ENCODE measurements at regions of chr2 and their contacts with region 1.

Region 1: DNA sequence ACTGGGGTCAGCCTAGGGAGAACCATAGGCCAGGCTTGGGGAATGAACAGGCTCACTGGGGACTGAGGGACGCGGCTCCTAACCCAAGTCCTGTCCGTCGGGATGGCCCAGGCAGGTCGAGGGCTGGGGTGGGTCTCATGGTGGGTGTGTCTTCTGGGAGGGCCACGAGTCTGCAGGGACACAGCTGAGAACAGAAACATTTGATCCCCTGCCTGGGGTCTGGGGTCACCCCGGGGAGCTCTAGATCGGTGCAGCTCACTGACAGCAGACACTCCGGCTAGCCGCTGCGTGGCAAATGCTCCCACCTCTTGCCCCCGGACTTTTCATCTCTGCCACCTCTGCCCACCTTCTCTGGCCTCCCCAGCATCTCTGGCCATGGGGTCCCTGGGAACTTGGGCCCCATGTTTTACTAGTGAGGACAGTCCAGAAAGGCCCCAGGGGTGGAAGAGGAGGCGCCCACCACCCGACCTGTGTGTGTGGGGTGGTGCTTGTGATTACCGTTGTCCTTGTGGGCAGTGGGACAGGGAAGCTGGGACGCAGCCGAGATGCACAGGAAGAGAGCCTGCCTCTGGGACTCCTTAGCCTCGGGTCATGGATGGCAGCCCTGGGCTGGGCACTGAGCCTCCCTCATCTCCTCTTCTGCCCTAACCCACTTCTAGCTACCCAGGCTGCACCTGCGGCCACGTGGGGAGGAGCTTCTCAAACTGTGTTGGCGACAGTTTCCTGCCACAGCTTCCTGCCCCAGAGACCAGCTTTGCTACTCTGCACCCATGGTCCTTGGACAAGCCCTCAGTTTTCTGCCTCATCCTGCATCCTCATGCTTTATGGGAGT is 4.9 kb downstream of the ZAP70 start:
- DNase-seq: peak; percentile 58 to 90 (median 80)
- ATAC-seq: peak; percentile 76
- H3K4me3 ChIP-seq: peak overlapping the region; percentile 68 to 91
- H3K4me3 Mint-ChIP-seq: peak overlapping the region; percentile 96
- H3K27ac ChIP-seq: peak overlapping the region; percentile 80 to 88
- H3K27ac Mint-ChIP-seq: peak overlapping the region; percentile 97
- H3K4me1 ChIP-seq: peaks cover 80% of the 10 kb centered on the region
- H3K4me1 Mint-ChIP-seq: peaks cover 85% of the 10 kb centered on the region
- H3K27me3 ChIP-seq: no peaks in the 10 kb centered on the region
- H3K27me3 Mint-ChIP-seq: no peaks in the 10 kb centered on the region
- CTCF ChIP-seq: no peak

Region 2: GRCh38 chr2:97645695-97646629 is 72.3 kb before region 1 on chr2 and contains the start of gene COX5B:
- CTCF ChIA-PET with region 1: interaction called, 4 read pairs
- POLR2A ChIA-PET with region 1: interaction called, 9 read pairs
- intact Hi-C with region 1: loop called (anchors 5 kb)
- DNase-seq: peak; percentile 97 to 99 (median 99)
- ATAC-seq: peak; percentile 97
- H3K4me3 ChIP-seq: peak within 1 kb of the TSS; percentile 94 to 97
- H3K4me3 Mint-ChIP-seq: peak within 1 kb of the TSS; percentile 91
- H3K27ac ChIP-seq: peak within 1 kb of the TSS; percentile 83 to 90
- H3K27ac Mint-ChIP-seq: peak within 1 kb of the TSS; percentile 95
- H3K4me1 ChIP-seq: peaks cover 20% of the 10 kb centered on the region
- H3K4me1 Mint-ChIP-seq: peaks cover 20% of the 10 kb centered on the region
- H3K27me3 ChIP-seq: no peaks in the 10 kb centered on the region
- H3K27me3 Mint-ChIP-seq: no peaks in the 10 kb centered on the region
- CTCF ChIP-seq: no peak
- total RNA-seq, gene COX5B: 115 to 117 TPM

Region 3: DNA sequence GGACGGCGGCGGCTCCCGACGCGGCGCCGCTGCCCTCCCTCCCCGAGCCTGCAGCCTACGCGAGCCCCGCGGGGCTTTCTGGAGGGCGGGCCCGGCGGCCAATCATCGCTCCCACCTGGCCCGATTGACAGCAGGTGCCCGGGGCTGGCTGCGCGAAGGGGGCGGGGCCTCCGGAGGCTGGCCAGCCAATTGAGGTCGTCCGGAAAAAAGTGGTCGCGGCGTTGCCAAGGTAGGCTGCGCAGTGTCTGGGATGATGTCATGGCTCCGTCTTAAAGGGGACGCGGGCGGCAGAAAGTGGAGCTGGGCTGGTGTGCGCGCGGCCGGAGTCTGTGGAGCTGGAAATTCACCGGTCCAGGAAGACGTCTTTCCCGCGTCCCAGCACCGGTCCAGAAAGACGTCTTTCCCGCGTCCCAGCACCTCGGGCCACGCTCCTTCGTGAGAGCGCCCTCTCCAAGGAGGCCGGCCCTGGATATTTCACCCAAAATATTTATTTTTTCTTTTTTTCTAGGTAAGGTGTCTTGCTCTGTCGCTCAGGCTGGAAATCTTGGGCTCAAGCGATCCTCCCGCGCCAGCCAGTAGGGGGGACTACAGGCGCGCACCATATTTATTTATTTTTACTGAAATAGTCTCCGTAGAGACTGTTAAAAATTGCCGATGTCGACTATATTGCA is 54.2 kb before region 1 on chr2 and contains the start of gene ACTR1B:
- CTCF ChIA-PET with region 1: interaction called, 3 read pairs
- POLR2A ChIA-PET with region 1: interaction called, 8 read pairs
- intact Hi-C with region 1: loop called in 1 of 2 experiments (anchors 1 kb)
- DNase-seq: peak; percentile 94 to 100 (median 97)
- ATAC-seq: peak; percentile 86
- H3K4me3 ChIP-seq: peak within 1 kb of the TSS; percentile 86 to 93
- H3K4me3 Mint-ChIP-seq: peak within 1 kb of the TSS; percentile 93
- H3K27ac ChIP-seq: peak within 1 kb of the TSS; percentile 94 to 97
- H3K27ac Mint-ChIP-seq: peak within 1 kb of the TSS; percentile 97
- H3K4me1 ChIP-seq: peaks cover 30% of the 10 kb centered on the region
- H3K4me1 Mint-ChIP-seq: peaks cover 28% of the 10 kb centered on the region
- H3K27me3 ChIP-seq: no peaks in the 10 kb centered on the region
- H3K27me3 Mint-ChIP-seq: no peaks in the 10 kb centered on the region
- CTCF ChIP-seq: no peak
- total RNA-seq, gene ACTR1B: 81.9 to 82.1 TPM

Region 4: DNA sequence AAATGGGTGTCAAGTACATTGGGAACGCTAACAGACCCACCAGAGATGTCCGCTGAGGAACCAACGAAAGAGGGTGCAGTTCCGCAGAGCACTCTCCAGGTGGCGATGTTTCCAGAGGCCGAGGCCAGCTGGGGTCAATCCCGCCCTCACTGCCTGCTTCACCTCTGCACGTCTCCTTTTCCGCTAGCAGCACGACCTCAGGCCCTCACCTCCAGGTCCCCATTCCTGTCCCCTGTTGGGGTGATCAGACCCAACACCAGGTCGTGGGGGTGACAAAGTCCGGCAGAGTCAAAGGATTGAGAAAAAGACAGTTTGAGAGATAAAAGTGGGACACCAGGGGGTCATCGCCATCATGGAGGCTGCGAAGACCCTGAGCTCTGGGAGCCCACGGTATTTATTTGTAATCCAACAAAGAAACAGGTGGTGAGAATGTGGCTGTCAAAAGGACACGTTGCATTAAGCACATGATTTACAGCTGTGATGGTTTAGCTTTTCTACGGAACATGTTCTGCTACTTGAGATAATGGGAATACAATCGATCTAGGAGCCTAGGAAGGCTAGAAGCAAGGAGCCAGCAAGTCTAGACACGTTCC is 22.4 kb after region 1 on chr2:
- CTCF ChIA-PET with region 1: interaction called, 132 read pairs
- POLR2A ChIA-PET with region 1: interaction called, 18 read pairs
- intact Hi-C with region 1: loop called in 1 of 2 experiments (anchors 2 kb)
- DNase-seq: peak in 4 of 9 experiments; percentile 37 to 70 (median 54)
- ATAC-seq: peak; percentile 55
- H3K4me3 ChIP-seq: no peak overlapping the region
- H3K4me3 Mint-ChIP-seq: no peak overlapping the region
- H3K27ac ChIP-seq: peak overlapping the region in 1 of 2 experiments; percentile 68
- H3K27ac Mint-ChIP-seq: peak overlapping the region; percentile 77
- H3K4me1 ChIP-seq: peaks cover 36% of the 10 kb centered on the region
- H3K4me1 Mint-ChIP-seq: peaks cover 59% of the 10 kb centered on the region
- H3K27me3 ChIP-seq: no peaks in the 10 kb centered on the region
- H3K27me3 Mint-ChIP-seq: no peaks in the 10 kb centered on the region
- CTCF ChIP-seq: peak; percentile 61

Region 5: GRCh38 chr2:97751752-97752151 is 33.5 kb after region 1 on chr2:
- CTCF ChIA-PET with region 1: interaction called, 99 read pairs
- POLR2A ChIA-PET with region 1: interaction called, 10 read pairs
- intact Hi-C with region 1: loop called in 1 of 2 experiments (anchors 1 kb)
- DNase-seq: no peak
- ATAC-seq: no peak
- H3K4me3 ChIP-seq: no peak overlapping the region
- H3K4me3 Mint-ChIP-seq: no peak overlapping the region
- H3K27ac ChIP-seq: no peak overlapping the region
- H3K27ac Mint-ChIP-seq: no peak overlapping the region
- H3K4me1 ChIP-seq: peaks cover 20% of the 10 kb centered on the region
- H3K4me1 Mint-ChIP-seq: peaks cover 23% of the 10 kb centered on the region
- H3K27me3 ChIP-seq: no peaks in the 10 kb centered on the region
- H3K27me3 Mint-ChIP-seq: no peaks in the 10 kb centered on the region
- CTCF ChIP-seq: no peak

Region 6: GRCh38 chr2:97766567-97766966 is 48.3 kb after region 1 on chr2:
- CTCF ChIA-PET with region 1: interaction called, 10 read pairs
- POLR2A ChIA-PET with region 1: interaction called, 3 read pairs
- intact Hi-C with region 1: no loop called
- DNase-seq: no peak
- ATAC-seq: no peak
- H3K4me3 ChIP-seq: no peak overlapping the region
- H3K4me3 Mint-ChIP-seq: no peak overlapping the region
- H3K27ac ChIP-seq: no peak overlapping the region
- H3K27ac Mint-ChIP-seq: no peak overlapping the region
- H3K4me1 ChIP-seq: peaks cover 13% of the 10 kb centered on the region
- H3K4me1 Mint-ChIP-seq: peaks cover 14% of the 10 kb centered on the region
- H3K27me3 ChIP-seq: no peaks in the 10 kb centered on the region
- H3K27me3 Mint-ChIP-seq: no peaks in the 10 kb centered on the region
- CTCF ChIP-seq: no peak

Region 7: DNA sequence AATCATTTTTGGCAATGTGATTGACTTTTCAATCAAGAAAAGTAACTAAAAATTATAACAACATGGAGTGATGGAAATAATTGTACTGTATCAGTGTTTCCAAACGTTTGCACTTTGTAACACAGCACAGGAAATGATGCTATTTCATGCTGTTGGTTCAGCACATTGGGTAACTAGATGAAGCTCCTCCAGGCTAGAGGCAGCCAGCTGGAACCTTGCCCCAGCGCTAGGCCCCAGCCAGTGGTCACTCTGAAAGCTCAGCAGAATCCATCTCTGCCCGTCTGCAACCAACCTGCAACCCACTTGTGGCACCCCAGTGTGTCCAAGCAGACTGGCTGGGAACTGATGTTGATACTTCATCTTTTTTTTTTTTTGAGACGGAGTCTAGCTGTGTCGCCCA is 905.4 kb after region 1 on chr2:
- CTCF ChIA-PET with region 1: no interaction called
- POLR2A ChIA-PET with region 1: no interaction called
- intact Hi-C with region 1: no loop called
- DNase-seq: no peak
- ATAC-seq: no peak
- H3K4me3 ChIP-seq: no peak overlapping the region
- H3K4me3 Mint-ChIP-seq: no peak overlapping the region
- H3K27ac ChIP-seq: no peak overlapping the region
- H3K27ac Mint-ChIP-seq: peak overlapping the region; percentile 88
- H3K4me1 ChIP-seq: peaks cover 2% of the 10 kb centered on the region
- H3K4me1 Mint-ChIP-seq: peaks cover 40% of the 10 kb centered on the region
- H3K27me3 ChIP-seq: no peaks in the 10 kb centered on the region
- H3K27me3 Mint-ChIP-seq: no peaks in the 10 kb centered on the region
- CTCF ChIP-seq: no peak

Measured in CD8-positive, alpha-beta T cell (primary cell).